Endothelial cell of umbilical vein (primary cell): ENCODE measurements at regions of chr18 and their contacts with region 1.

Region 1: GRCh38 chr18:10131460-10132395 is 217.9 kb downstream of the VAPA start:
- DNase-seq: no peak
- H3K4me3 ChIP-seq: peak overlapping the region in 1 of 3 experiments; percentile 7
- H3K27ac ChIP-seq: no peak overlapping the region
- H3K4me1 ChIP-seq: no peaks in the 10 kb centered on the region
- H3K27me3 ChIP-seq: peaks cover 7 to 13% of the 10 kb centered on the region in 2 experiments
- CTCF ChIP-seq: no peak
- POLR2A ChIP-seq: no peak

Region 2: GRCh38 chr18:10057894-10058791 is 73.6 kb before region 1 on chr18:
- CTCF ChIA-PET with region 1: no interaction called
- POLR2A ChIA-PET with region 1: no interaction called
- dilution Hi-C with region 1: no loop called
- intact Hi-C with region 1: loop called (anchors 5 kb)
- DNase-seq: peak; percentile 66
- H3K4me3 ChIP-seq: no peak overlapping the region
- H3K27ac ChIP-seq: peak overlapping the region; percentile 96
- H3K4me1 ChIP-seq: peaks cover 56% of the 10 kb centered on the region
- H3K27me3 ChIP-seq: no peaks in the 10 kb centered on the region
- CTCF ChIP-seq: no peak
- POLR2A ChIP-seq: peak; percentile 27